AG04450 (cell line): ENCODE measurements at regions of chr19 and their contacts with region 1.

Region 1: DNA sequence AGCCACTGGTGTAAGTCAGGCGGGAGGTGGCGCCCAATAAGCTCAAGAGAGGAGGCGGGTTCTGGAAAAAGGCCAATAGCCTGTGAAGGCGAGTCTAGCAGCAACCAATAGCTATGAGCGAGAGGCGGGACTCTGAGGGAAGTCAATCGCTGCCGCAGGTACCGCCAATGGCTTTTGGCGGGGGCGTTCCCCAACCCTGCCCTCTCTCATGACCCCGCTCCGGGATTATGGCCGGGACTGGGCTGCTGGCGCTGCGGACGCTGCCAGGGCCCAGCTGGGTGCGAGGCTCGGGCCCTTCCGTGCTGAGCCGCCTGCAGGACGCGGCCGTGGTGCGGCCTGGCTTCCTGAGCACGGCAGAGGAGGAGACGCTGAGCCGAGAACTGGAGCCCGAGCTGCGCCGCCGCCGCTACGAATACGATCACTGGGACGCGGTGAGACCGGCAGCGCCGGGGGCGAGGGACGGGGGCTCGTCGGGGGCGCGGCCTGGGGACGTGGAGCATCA is at the start of gene ALKBH7:
- DNase-seq: peak; percentile 100
- H3K4me3 ChIP-seq: peak within 1 kb of the TSS; percentile 77
- H3K27ac ChIP-seq: peak within 1 kb of the TSS; percentile 93
- H3K27me3 ChIP-seq: no peaks in the 10 kb centered on the region
- CTCF ChIP-seq: no peak
- polyA plus RNA-seq, gene ALKBH7: 11.6 and 16.4 TPM in 2 replicates

Region 2: DNA sequence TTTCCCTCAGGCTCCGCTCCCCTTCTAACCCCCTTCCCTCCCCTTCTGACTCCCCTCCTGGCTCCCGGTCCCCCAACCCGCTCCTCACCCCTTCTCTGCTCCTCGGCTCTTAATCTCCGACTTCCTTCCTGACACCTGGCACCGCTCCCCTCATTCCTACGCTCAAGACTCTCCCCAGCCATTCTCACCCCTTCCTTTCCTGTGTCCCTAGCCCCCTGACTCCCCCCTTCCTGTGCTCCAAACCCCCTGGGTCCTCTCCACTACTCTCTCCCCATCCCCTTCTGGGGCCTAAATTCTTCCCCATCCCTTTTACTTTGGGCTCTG is 10.7 kb before region 1 on chr19:
- CTCF ChIA-PET with region 1: interaction called, 4 read pairs
- POLR2A ChIA-PET with region 1: interaction called, 11 read pairs
- DNase-seq: no peak
- H3K4me3 ChIP-seq: peak overlapping the region; percentile 75
- H3K27ac ChIP-seq: peak overlapping the region; percentile 11
- H3K27me3 ChIP-seq: no peaks in the 10 kb centered on the region
- CTCF ChIP-seq: no peak

Region 3: GRCh38 chr19:6424939-6425731 is 52.5 kb after region 1 on chr19:
- CTCF ChIA-PET with region 1: no interaction called
- POLR2A ChIA-PET with region 1: interaction called, 15 read pairs
- DNase-seq: peak; percentile 100
- H3K4me3 ChIP-seq: no peak overlapping the region
- H3K27ac ChIP-seq: peak overlapping the region; percentile 90
- H3K27me3 ChIP-seq: peaks cover 3% of the 10 kb centered on the region
- CTCF ChIP-seq: no peak